ENCODE measurements at regions of chr6 and their contacts with region 1.

Region 1: DNA sequence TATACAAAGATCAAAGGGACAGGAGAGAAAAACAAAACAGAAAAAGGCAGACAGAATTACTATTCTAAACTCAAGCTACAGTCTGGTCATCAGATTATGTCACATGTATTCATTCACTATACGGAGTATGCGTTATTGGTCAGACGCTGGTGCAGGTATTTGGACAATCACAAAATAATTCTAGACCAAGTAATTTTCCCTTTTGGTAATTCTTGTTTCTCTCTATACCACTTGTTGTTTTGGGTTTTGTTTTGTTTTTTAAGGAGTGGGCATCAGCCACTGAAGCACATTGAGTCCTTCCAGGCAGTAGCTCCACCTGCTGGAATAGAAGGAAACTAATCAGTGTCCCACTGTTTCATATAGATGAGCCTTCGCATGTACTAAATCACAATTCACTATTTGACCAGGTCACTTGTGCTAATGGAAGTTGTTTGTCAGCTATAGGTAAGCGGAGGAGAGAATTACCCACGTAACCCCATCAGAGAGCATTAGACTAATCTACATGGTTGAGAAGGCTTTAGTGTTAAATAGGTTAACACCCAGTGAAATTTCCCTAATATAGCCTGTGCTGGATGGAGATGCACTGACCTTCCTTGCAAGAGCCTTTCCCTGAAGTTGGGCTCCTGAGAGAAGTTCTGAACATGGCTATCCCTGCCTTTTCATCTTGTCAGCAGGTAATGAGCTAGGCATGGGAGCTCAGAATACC is 77.9 kb downstream of the TNFAIP3 start:
- DNase-seq: no peak
- ATAC-seq: peak; percentile 72
- H3K4me3 ChIP-seq: peak overlapping the region; percentile 37; the same call in 1 of the 2 replicates
- H3K27ac ChIP-seq: peak overlapping the region; percentile 42
- H3K4me1 ChIP-seq: peaks cover 37% of the 10 kb centered on the region
- H3K27me3 ChIP-seq: no peaks in the 10 kb centered on the region
- CTCF ChIP-seq: peak; percentile 75 to 80 (median 75)
- EP300 ChIP-seq: no peak
- POLR2A ChIP-seq: no peak
- RAD21 ChIP-seq: peak; percentile 83

Region 2: DNA sequence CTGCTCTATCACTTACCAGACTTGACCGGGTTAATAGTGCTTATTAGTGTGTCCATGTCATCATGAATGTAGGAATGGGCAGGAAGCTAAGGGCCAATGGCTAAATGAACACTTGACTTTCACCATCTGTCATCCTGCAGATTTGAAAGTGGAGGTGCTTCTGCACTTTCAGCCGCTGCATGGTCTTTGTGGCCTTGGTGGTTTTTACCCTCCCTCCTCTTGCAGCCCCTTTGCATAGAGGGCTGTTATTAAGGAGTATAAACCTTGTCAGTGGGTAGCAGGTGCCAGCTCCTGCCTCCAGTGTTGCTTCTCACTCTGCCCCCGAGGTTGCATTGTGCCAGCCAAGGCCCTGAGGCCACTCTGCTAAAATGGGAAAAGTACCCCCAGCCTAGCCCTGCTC is 200.1 kb before region 1 on chr6:
- CTCF ChIA-PET with region 1: interaction called, 12 read pairs
- POLR2A ChIA-PET with region 1: no interaction called
- RAD21 ChIA-PET with region 1: no interaction called
- SMC1A ChIA-PET with region 1: interaction called, 3 read pairs
- in situ Hi-C with region 1: no loop called
- intact Hi-C with region 1: no loop called
- DNase-seq: peak; percentile 75
- ATAC-seq: peak; percentile 79
- H3K4me3 ChIP-seq: peak overlapping the region; percentile 29; the same call in 1 of the 2 replicates
- H3K27ac ChIP-seq: peak overlapping the region; percentile 34; the same call in 1 of the 2 replicates
- H3K4me1 ChIP-seq: peaks cover 36% of the 10 kb centered on the region
- H3K27me3 ChIP-seq: no peaks in the 10 kb centered on the region
- CTCF ChIP-seq: no peak
- EP300 ChIP-seq: peak; percentile 25 to 28; a peak in 2 of 4 replicates
- POLR2A ChIP-seq: no peak
- RAD21 ChIP-seq: no peak

Region 3: GRCh38 chr6:137866914-137867684 is 77.8 kb before region 1 on chr6 and contains the start of gene TNFAIP3:
- CTCF ChIA-PET with region 1: interaction called, 712 read pairs
- POLR2A ChIA-PET with region 1: interaction called, 42 read pairs
- RAD21 ChIA-PET with region 1: interaction called, 774 read pairs
- SMC1A ChIA-PET with region 1: interaction called, 1,237 read pairs
- in situ Hi-C with region 1: loop called (anchors 5 kb)
- intact Hi-C with region 1: loop called (anchors 1 kb)
- DNase-seq: peak; percentile 84
- ATAC-seq: peak; percentile 78
- H3K4me3 ChIP-seq: peak within 1 kb of the TSS; percentile 99
- H3K27ac ChIP-seq: peak within 1 kb of the TSS; percentile 72
- H3K4me1 ChIP-seq: peaks cover 5% of the 10 kb centered on the region; the same call in 1 of the 2 replicates
- H3K27me3 ChIP-seq: no peaks in the 10 kb centered on the region
- CTCF ChIP-seq: peak; percentile 63 to 83 (median 70)
- EP300 ChIP-seq: peak; percentile 64 to 90
- POLR2A ChIP-seq: peak; percentile 95
- RAD21 ChIP-seq: peak; percentile 73
- polyA plus RNA-seq, gene TNFAIP3: 18.0 to 31.5 TPM

Region 4: GRCh38 chr6:137903933-137904821 is 40.8 kb before region 1 on chr6:
- CTCF ChIA-PET with region 1: interaction called, 71 read pairs
- POLR2A ChIA-PET with region 1: interaction called, 7 read pairs
- RAD21 ChIA-PET with region 1: interaction called, 29 read pairs
- SMC1A ChIA-PET with region 1: interaction called, 102 read pairs
- in situ Hi-C with region 1: no loop called
- intact Hi-C with region 1: loop called (anchors 1 kb)
- DNase-seq: no peak
- ATAC-seq: peak; percentile 79
- H3K4me3 ChIP-seq: peak overlapping the region; percentile 54; the same call in 1 of the 2 replicates
- H3K27ac ChIP-seq: peak overlapping the region; percentile 95
- H3K4me1 ChIP-seq: peaks cover 23% of the 10 kb centered on the region
- H3K27me3 ChIP-seq: no peaks in the 10 kb centered on the region
- CTCF ChIP-seq: no peak
- EP300 ChIP-seq: peak; percentile 69 to 72; a peak in 2 of 4 replicates
- POLR2A ChIP-seq: peak; percentile 41
- RAD21 ChIP-seq: peak; percentile 22; the same call in 1 of the 2 replicates

Region 5: GRCh38 chr6:137927777-137928218 is 17.1 kb before region 1 on chr6:
- CTCF ChIA-PET with region 1: interaction called, 102 read pairs
- POLR2A ChIA-PET with region 1: interaction called, 26 read pairs
- RAD21 ChIA-PET with region 1: interaction called, 57 read pairs
- SMC1A ChIA-PET with region 1: interaction called, 111 read pairs
- in situ Hi-C with region 1: no loop called
- intact Hi-C with region 1: loop called (anchors 1 kb)
- DNase-seq: peak; percentile 99
- ATAC-seq: peak; percentile 93
- H3K4me3 ChIP-seq: peak overlapping the region; percentile 19; the same call in 1 of the 2 replicates
- H3K27ac ChIP-seq: peak overlapping the region; percentile 98
- H3K4me1 ChIP-seq: peaks cover 61% of the 10 kb centered on the region
- H3K27me3 ChIP-seq: no peaks in the 10 kb centered on the region
- CTCF ChIP-seq: no peak
- EP300 ChIP-seq: peak; percentile 91; a peak in 3 of 4 replicates
- POLR2A ChIP-seq: peak; percentile 69; the same call in 1 of the 2 replicates
- RAD21 ChIP-seq: 0 out of 2 replicates have a peak, but pooled peaks have one; percentile 4

Region 6: GRCh38 chr6:137967689-137968454 is 22.9 kb after region 1 on chr6:
- CTCF ChIA-PET with region 1: interaction called, 83 read pairs
- POLR2A ChIA-PET with region 1: interaction called, 5 read pairs
- RAD21 ChIA-PET with region 1: interaction called, 13 read pairs
- SMC1A ChIA-PET with region 1: interaction called, 112 read pairs
- in situ Hi-C with region 1: no loop called
- intact Hi-C with region 1: no loop called
- DNase-seq: no peak
- ATAC-seq: no peak
- H3K4me3 ChIP-seq: no peak overlapping the region
- H3K27ac ChIP-seq: no peak overlapping the region
- H3K4me1 ChIP-seq: peaks cover 32% of the 10 kb centered on the region
- H3K27me3 ChIP-seq: no peaks in the 10 kb centered on the region
- CTCF ChIP-seq: no peak
- EP300 ChIP-seq: no peak
- POLR2A ChIP-seq: no peak
- RAD21 ChIP-seq: no peak

Region 7: GRCh38 chr6:138088330-138088766 is 143.4 kb after region 1 on chr6:
- CTCF ChIA-PET with region 1: no interaction called
- POLR2A ChIA-PET with region 1: no interaction called
- RAD21 ChIA-PET with region 1: no interaction called
- SMC1A ChIA-PET with region 1: no interaction called
- in situ Hi-C with region 1: no loop called
- intact Hi-C with region 1: no loop called
- DNase-seq: no peak
- ATAC-seq: no peak
- H3K4me3 ChIP-seq: no peak overlapping the region
- H3K27ac ChIP-seq: no peak overlapping the region
- H3K4me1 ChIP-seq: no peaks in the 10 kb centered on the region
- H3K27me3 ChIP-seq: peaks cover 1 to 8% of the 10 kb centered on the region in 2 experiments; a peak in 1 of 4 replicates
- CTCF ChIP-seq: no peak
- EP300 ChIP-seq: no peak
- POLR2A ChIP-seq: no peak
- RAD21 ChIP-seq: no peak

Measured in GM12878 (cell line).